SK-N-SH (cell line): ENCODE measurements at regions of chr11 and their contacts with region 1.

Region 1: GRCh38 chr11:117843666-117844484 is 19.3 kb upstream of the FXYD2 start:
- DNase-seq: peak; percentile 74
- H3K4me3 ChIP-seq: no peak overlapping the region; a peak in 1 of 4 replicates
- H3K27ac ChIP-seq: no peak overlapping the region
- H3K4me1 ChIP-seq: peaks cover 0 to 2% of the 10 kb centered on the region in 2 experiments; a peak in 1 of 4 replicates
- H3K27me3 ChIP-seq: no peaks in the 10 kb centered on the region; the same call in 1 of the 2 replicates
- CTCF ChIP-seq: peak; percentile 96
- EP300 ChIP-seq: no peak
- RAD21 ChIP-seq: peak; percentile 91

Region 2: DNA sequence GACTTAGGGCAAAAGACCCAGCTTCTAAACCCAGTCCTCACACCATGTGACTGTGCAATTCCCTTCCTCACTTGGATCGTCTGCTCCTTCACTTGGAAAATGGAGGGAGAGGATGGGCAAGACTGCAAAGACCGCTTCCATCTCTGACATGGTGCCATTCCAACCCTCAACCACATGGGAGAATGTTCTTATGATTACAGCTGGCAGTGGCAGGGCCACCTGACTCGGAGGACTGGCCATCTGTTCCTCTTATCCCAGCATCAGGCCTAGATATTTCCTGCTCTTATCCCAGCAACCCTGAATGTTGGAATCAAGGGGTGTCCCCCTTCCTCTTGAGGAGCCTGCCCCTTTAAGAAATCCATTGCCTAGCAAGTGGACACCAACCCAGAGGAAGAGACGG is 62.2 kb before region 1 on chr11:
- CTCF ChIA-PET with region 1: no interaction called
- POLR2A ChIA-PET with region 1: no interaction called
- DNase-seq: peak; percentile 60
- H3K4me3 ChIP-seq: no peak overlapping the region
- H3K27ac ChIP-seq: no peak overlapping the region
- H3K4me1 ChIP-seq: peaks cover 0 to 19% of the 10 kb centered on the region in 2 experiments; a peak in 1 of 4 replicates
- H3K27me3 ChIP-seq: peaks cover 29% of the 10 kb centered on the region; the same call in 1 of the 2 replicates
- CTCF ChIP-seq: no peak
- EP300 ChIP-seq: peak in 1 of 2 experiments; percentile 14; a peak in 1 of 4 replicates
- RAD21 ChIP-seq: no peak

Region 3: GRCh38 chr11:117828611-117829368 is 15.1 kb before region 1 on chr11:
- CTCF ChIA-PET with region 1: interaction called, 43 read pairs
- POLR2A ChIA-PET with region 1: no interaction called
- DNase-seq: no peak
- H3K4me3 ChIP-seq: no peak overlapping the region
- H3K27ac ChIP-seq: no peak overlapping the region
- H3K4me1 ChIP-seq: peaks cover 0 to 6% of the 10 kb centered on the region in 2 experiments; a peak in 2 of 4 replicates
- H3K27me3 ChIP-seq: peaks cover 9% of the 10 kb centered on the region; the same call in 1 of the 2 replicates
- CTCF ChIP-seq: no peak
- EP300 ChIP-seq: no peak
- RAD21 ChIP-seq: no peak

Region 4: DNA sequence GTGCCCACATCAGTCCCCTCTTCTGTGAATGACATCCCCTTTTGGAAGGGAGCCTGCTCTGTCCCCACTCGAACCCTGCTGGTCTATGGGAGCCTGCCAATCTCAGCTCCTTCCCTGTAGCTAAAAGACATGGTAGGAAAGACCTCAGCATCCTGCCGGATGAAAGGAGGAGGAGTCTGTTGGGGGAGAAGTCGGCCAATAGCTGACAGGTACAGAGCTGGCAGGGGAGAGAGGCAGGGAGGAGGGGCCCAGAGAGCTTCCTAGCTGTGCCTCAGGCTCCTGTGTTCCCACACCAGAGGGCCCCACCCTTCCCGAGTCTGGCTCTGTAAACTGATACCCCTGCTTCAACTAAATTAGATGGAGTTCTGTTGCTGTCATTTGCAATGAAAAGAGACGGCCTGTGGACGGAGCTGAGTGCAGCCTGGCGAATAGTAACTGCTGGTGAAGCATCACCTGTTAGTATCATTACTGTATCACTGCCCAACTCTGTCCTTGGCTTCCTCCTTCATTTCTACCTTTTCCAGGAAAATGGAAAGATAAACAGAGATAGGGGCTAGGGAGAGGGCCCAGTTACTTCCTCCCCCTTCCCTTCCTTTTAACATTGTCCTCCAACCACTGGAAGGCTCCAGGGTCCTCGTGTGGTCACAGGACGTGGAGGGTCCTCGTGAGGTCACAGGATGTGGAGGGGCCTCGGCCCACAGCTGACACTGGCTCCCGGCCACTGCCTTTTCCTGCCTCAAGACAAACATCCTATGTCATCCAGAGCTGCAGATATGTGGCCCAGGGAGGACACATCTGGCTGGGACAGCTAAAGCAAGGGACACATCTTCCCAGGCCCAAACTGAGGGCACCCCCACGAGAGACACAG is 17.5 kb after region 1 on chr11:
- CTCF ChIA-PET with region 1: interaction called, 33 read pairs
- POLR2A ChIA-PET with region 1: no interaction called
- DNase-seq: peak; percentile 74
- H3K4me3 ChIP-seq: no peak overlapping the region
- H3K27ac ChIP-seq: peak overlapping the region in 1 of 2 experiments; percentile 24; a peak in 1 of 4 replicates
- H3K4me1 ChIP-seq: peaks cover 0 to 20% of the 10 kb centered on the region in 2 experiments; a peak in 2 of 4 replicates
- H3K27me3 ChIP-seq: peaks cover 2% of the 10 kb centered on the region; the same call in 1 of the 2 replicates
- CTCF ChIP-seq: no peak
- EP300 ChIP-seq: no peak
- RAD21 ChIP-seq: no peak

Region 5: DNA sequence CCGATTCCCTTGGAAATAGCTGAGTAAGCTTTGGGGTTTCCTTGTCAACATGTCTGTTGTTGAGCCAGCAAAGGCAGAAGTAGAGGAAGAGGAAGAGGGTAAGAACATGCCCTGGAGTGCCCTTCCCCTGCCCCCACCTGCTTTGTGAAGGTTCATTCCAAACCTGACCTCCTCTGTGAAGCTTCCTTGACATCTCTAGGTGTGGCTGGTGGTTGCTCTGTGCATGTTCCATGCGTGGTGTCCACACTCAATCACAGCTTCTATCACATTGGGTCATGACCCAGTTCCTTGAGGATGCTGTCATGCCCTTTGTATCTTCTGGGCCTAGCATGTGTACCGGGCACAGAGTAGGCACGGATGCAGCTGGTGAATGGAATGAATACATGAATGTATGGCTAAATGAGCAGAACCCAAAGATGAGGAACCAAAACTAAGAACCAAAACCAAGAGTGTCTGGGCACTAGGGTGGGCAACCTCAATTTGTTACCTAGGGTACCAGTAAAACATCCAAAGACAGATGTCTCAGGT is 56.3 kb after region 1 on chr11:
- CTCF ChIA-PET with region 1: interaction called, 18 read pairs
- POLR2A ChIA-PET with region 1: no interaction called
- DNase-seq: no peak
- H3K4me3 ChIP-seq: no peak overlapping the region
- H3K27ac ChIP-seq: no peak overlapping the region
- H3K4me1 ChIP-seq: no peaks in the 10 kb centered on the region; a peak in 1 of 4 replicates
- H3K27me3 ChIP-seq: peaks cover 11% of the 10 kb centered on the region; the same call in 1 of the 2 replicates
- CTCF ChIP-seq: no peak
- EP300 ChIP-seq: no peak
- RAD21 ChIP-seq: no peak

Region 6: DNA sequence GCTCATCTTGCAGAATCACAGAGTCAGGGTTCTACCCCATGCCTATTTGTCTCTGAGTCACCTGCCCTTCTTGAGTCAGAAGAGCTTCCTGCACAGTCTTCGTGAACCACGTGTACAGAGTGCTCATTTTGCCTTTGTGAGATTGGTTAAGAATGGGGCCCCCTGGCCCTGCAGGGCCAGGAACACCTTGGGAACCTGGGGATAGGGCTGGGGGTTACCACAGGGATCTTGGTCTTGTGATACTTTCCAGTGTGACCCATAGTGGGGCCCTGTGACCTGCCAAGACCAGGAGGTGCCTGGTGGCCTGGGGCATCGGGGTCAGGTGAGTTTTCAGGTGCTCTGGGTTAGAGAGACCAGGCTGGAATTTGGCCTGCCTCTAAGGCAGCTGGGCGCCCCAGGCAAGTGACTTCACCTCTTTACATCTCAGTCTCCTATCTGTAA is 75.9 kb after region 1 on chr11:
- CTCF ChIA-PET with region 1: interaction called, 12 read pairs
- POLR2A ChIA-PET with region 1: no interaction called
- DNase-seq: no peak
- H3K4me3 ChIP-seq: no peak overlapping the region
- H3K27ac ChIP-seq: no peak overlapping the region
- H3K4me1 ChIP-seq: no peaks in the 10 kb centered on the region
- H3K27me3 ChIP-seq: no peaks in the 10 kb centered on the region; the same call in 1 of the 2 replicates
- CTCF ChIP-seq: no peak
- EP300 ChIP-seq: no peak
- RAD21 ChIP-seq: no peak

Region 7: DNA sequence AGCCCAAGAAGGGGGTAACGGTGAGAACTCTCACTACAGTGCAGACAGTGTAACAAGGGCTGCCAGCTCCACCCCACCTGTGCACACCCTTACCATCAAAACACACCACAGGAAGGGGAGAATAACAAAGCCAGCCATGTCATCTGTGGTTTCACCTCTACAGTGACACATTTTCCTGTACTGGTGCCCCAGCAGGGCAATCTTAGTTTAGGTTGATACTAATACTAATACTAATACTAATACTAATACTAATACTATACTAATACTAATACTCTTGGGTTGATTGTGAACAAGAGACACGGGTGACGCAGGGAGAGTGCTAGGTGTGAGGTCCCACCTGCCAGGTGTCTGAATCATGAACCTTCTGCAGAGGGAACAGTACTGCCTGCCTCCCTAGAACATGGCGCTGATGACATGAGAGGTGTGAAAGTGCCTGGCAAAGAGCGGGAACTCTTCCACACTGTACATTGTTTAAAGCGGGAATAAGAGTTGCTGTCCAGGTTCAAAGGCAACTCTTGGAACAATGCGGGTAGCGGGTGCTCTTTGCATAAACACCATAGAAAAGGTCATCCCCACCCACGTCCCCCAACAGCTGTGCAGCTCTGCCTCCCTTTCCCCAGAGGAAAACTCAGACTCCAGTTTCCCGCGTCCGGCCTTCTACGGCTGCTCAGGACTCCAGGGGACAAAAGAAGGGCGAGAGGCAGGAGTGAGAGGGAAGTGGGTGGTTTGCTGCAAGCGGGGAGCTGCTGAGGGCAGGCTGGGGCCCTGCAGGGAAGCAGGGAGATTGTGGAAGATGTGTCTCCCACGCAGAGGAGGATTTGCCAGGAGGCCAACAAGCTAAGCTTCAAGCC is 208.0 kb after region 1 on chr11:
- CTCF ChIA-PET with region 1: interaction called, 33 read pairs
- POLR2A ChIA-PET with region 1: no interaction called
- DNase-seq: no peak
- H3K4me3 ChIP-seq: no peak overlapping the region
- H3K27ac ChIP-seq: no peak overlapping the region
- H3K4me1 ChIP-seq: no peaks in the 10 kb centered on the region
- H3K27me3 ChIP-seq: peaks cover 8% of the 10 kb centered on the region; the same call in 1 of the 2 replicates
- CTCF ChIP-seq: no peak
- EP300 ChIP-seq: no peak
- RAD21 ChIP-seq: no peak